ENCODE measurements at regions of chr3 and their contacts with region 1.

Region 1: DNA sequence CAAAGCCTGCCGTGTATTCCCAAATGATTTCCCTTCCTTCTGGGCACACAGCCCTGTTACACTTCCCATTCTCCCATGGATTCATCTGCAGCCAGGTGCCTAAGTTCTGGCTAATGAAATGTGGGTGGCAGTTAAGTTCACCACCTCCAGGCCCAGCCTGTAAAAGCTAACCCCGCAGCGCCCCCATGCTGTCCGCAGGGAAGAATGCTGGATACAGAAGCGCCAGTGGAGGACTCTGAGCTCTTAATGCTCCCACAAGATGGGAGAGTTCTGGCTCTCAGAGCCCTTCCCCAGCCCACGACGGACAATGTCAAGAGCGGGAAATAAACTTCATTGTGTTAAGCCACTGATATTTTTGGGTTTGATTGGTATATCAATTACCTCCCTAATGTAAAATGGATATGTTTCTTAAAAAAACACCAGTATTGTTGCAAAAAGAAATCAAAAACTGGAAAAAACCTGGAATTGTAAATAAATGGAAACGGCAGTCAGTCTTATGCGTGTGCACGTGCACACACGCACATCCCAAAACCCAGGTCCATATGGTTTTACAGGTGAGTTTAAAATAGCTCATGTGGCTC is 37.7 kb upstream of the FGD5 start:
- DNase-seq: peak in 3 of 5 donors; percentile 40 to 49 (median 46)
- H3K4me3 ChIP-seq: no peak overlapping the region
- H3K27ac ChIP-seq: no peak overlapping the region
- H3K4me1 ChIP-seq: no peaks in the 10 kb centered on the region
- H3K27me3 ChIP-seq: no peaks in the 10 kb centered on the region
- CTCF ChIP-seq: no peak
- EP300 ChIP-seq: no peak
- POLR2A ChIP-seq: no peak

Region 2: DNA sequence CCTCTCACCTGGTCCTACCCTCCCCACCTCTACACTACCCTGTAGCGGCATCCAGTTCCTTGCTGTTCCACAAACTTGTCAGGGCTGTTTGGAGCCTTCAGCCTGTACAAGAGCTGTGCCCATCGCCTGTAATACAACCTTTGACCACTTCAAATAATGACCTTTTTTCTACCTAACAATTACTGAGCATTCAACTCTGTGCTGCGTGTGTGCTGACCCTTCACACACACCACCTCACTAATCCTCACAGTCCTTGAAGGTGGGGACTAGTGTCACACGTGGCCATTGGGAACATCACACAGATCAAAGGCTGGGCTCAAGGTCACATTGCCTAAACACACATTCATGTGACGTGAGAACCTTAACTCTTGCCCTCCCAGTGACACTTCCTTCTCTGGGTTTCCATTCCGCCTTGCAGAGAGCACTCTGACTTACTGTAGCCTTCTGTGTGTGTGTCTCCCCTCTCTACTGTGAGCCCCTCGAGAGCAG is 103.0 kb before region 1 on chr3:
- intact Hi-C with region 1: loop called in 1 of 4 experiments (anchors 10 kb)
- DNase-seq: no peak
- H3K4me3 ChIP-seq: no peak overlapping the region
- H3K27ac ChIP-seq: no peak overlapping the region
- H3K4me1 ChIP-seq: no peaks in the 10 kb centered on the region
- H3K27me3 ChIP-seq: no peaks in the 10 kb centered on the region
- CTCF ChIP-seq: no peak
- EP300 ChIP-seq: no peak
- POLR2A ChIP-seq: no peak

Region 3: DNA sequence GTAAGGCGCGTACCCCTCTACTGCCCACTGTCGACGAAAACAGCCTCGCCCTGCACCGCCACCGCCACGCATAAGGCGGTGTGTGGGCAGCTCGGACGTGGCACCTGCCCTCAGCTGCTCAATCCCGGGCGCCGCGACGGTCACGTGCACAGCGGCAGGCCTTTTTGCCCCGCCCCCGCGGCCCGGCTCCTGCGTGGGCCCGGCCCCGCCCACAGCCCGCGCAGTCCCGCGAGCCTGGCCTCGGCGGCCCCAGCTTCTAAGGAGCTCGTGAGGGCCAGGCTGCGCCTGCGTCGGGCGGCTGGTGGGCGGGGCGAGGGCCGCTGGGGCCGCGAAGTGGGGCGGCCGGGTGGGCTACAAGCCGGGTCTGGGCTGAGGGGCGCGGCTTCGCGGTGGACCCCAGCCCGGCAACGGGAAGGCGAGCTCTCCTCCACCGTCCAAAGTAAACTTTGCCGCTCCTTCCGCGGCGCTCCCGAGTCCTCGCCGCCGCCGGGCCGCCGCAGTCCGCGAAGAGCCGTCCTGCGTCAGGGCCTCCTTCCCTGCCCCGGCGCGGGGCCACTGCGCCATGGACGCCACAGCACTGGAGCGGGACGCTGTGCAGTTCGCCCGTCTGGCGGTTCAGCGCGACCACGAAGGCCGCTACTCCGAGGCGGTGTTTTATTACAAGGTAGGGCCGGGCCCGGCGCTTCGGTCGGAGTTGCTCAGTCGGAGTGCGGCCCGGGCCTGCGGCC is 425.1 kb after region 1 on chr3 and contains the start of gene CAPN7:
- intact Hi-C with region 1: no loop called
- DNase-seq: peak; percentile 93 to 97 (median 94)
- H3K4me3 ChIP-seq: peak within 1 kb of the TSS; percentile 52
- H3K27ac ChIP-seq: peak within 1 kb of the TSS; percentile 92 to 95
- H3K4me1 ChIP-seq: peaks cover 4% of the 10 kb centered on the region
- H3K27me3 ChIP-seq: no peaks in the 10 kb centered on the region
- CTCF ChIP-seq: peak in 2 of 3 donors; percentile 27 to 63
- EP300 ChIP-seq: no peak
- POLR2A ChIP-seq: peak; percentile 86
- total RNA-seq, gene CAPN7: 44.1 to 70.4 (median 54.8) TPM

Measured in ovary (tissue), 10 donors.